K562 (cell line): ENCODE measurements at regions of chr5 and their contacts with region 1.

Region 1: GRCh38 chr5:150052956-150053712 is 33.2 kb downstream of the CSF1R start:
- DNase-seq: peak in 1 of 4 experiments; percentile 37
- ATAC-seq: no peak
- H3K4me3 ChIP-seq: no peak overlapping the region
- H3K27ac ChIP-seq: peak overlapping the region; percentile 48; the same call in 2 of the 3 replicates
- H3K4me1 ChIP-seq: peaks cover 27 to 37% of the 10 kb centered on the region in 2 experiments
- H3K27me3 ChIP-seq: no peaks in the 10 kb centered on the region
- CTCF ChIP-seq: no peak
- EP300 ChIP-seq: no peak
- POLR2A ChIP-seq: no peak
- RAD21 ChIP-seq: no peak

Region 2: GRCh38 chr5:150035139-150035893 is 17.8 kb before region 1 on chr5:
- CTCF ChIA-PET with region 1: no interaction called
- POLR2A ChIA-PET with region 1: interaction called, 11 read pairs
- in situ Hi-C with region 1: no loop called
- intact Hi-C with region 1: no loop called
- DNase-seq: no peak
- ATAC-seq: no peak
- H3K4me3 ChIP-seq: no peak overlapping the region
- H3K27ac ChIP-seq: no peak overlapping the region
- H3K4me1 ChIP-seq: no peaks in the 10 kb centered on the region
- H3K27me3 ChIP-seq: no peaks in the 10 kb centered on the region
- CTCF ChIP-seq: no peak
- EP300 ChIP-seq: no peak
- POLR2A ChIP-seq: no peak
- RAD21 ChIP-seq: no peak

Region 3: DNA sequence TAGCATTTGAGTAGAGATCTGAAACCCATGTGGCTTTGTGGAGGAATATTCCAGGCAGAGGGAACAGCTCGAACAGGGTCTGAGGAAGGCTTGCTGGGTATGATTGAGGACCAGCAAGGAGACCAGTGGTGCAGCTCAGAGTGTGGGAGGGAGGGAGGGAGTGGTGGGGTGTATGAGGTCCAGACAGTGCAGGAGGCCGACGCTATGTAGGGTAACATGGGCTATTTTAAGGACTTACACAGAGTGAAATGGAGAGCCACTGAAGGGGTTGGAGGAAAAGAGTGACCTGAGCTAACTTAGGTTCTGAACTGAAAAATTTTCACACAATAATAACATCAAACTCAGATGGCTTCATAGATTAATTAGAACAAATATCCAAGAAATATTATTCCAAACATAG is 10.7 kb before region 1 on chr5:
- CTCF ChIA-PET with region 1: no interaction called
- POLR2A ChIA-PET with region 1: interaction called, 13 read pairs
- in situ Hi-C with region 1: no loop called
- intact Hi-C with region 1: no loop called
- DNase-seq: no peak
- ATAC-seq: no peak
- H3K4me3 ChIP-seq: no peak overlapping the region
- H3K27ac ChIP-seq: no peak overlapping the region
- H3K4me1 ChIP-seq: peaks cover 4 to 14% of the 10 kb centered on the region in 2 experiments; a peak in 4 of 5 replicates
- H3K27me3 ChIP-seq: no peaks in the 10 kb centered on the region
- CTCF ChIP-seq: no peak
- EP300 ChIP-seq: no peak
- POLR2A ChIP-seq: no peak
- RAD21 ChIP-seq: no peak

Region 4: DNA sequence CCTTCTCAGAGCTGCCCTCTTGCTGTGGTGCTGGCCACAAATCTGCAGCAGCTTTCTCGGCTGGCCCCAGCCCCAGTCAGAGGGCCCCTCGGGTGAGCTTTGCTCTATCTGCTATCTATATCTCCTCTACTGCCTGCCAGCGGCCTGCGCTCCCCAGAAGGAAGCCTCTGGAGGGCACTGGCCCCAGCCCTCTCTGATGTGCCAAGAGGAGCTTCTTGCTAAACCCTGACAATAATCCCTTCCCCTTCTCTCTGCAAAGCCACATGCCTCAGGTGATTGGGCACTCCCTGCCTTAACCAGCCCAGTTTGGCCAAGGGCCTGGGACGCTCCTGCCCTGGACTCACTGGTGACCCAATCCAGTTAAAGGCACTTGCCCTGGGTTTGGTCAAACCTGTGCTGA is 193.7 kb after region 1 on chr5:
- CTCF ChIA-PET with region 1: no interaction called
- POLR2A ChIA-PET with region 1: no interaction called
- in situ Hi-C with region 1: no loop called
- intact Hi-C with region 1: no loop called
- DNase-seq: peak in 1 of 4 experiments; percentile 29
- ATAC-seq: no peak
- H3K4me3 ChIP-seq: no peak overlapping the region
- H3K27ac ChIP-seq: no peak overlapping the region
- H3K4me1 ChIP-seq: peaks cover 22 to 23% of the 10 kb centered on the region in 2 experiments
- H3K27me3 ChIP-seq: peaks cover 15 to 41% of the 10 kb centered on the region in 2 experiments; a peak in 4 of 5 replicates
- CTCF ChIP-seq: no peak
- EP300 ChIP-seq: no peak
- POLR2A ChIP-seq: no peak
- RAD21 ChIP-seq: no peak